Gastrocnemius medialis (tissue), 4 donors: ENCODE measurements at regions of chr10 and their contacts with region 1.

Region 1: DNA sequence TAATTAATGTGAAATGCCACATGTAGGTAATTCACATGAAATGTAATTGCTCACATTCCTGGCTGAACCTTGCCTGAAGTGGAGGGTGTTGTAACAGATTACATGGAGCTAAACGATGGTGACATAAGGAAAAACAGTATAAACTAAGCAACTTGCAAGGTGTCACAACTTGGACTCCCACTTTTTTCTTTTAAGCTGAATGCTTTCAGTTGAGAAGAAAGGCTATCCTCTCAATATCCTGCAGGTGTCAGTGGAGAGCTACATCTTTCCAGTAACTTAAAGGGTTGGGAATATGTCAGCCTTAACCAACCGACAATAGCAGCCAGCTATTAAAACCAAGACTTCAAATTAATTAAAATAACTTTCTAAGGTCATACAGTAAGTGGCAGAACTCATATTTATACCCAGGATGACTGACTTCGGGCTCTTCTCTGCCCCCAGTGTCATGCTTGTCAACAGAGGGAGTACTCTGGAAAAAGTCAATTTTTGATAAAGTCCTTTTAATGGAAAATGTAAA is 33.7 kb downstream of the NRBF2 start:
- DNase-seq: no peak
- ATAC-seq: peak; percentile 77 to 81
- H3K4me3 ChIP-seq: no peak overlapping the region
- H3K27ac ChIP-seq: peak overlapping the region in 1 of 4 donors; percentile 29
- H3K4me1 ChIP-seq: peaks cover 0 to 11% of the 10 kb centered on the region in 2 donors
- H3K27me3 ChIP-seq: no peaks in the 10 kb centered on the region
- CTCF ChIP-seq: peak; percentile 67 to 85 (median 78)
- POLR2A ChIP-seq: no peak

Region 2: GRCh38 chr10:62594093-62594520 is 572.7 kb before region 1 on chr10:
- in situ Hi-C with region 1: loop called in 3 of 4 experiments (anchors 10 to 25 kb)
- intact Hi-C with region 1: no loop called
- DNase-seq: peak; percentile 12 to 27
- ATAC-seq: peak; percentile 74 to 88
- H3K4me3 ChIP-seq: no peak overlapping the region
- H3K27ac ChIP-seq: no peak overlapping the region
- H3K4me1 ChIP-seq: no peaks in the 10 kb centered on the region
- H3K27me3 ChIP-seq: no peaks in the 10 kb centered on the region
- CTCF ChIP-seq: peak; percentile 61 to 76 (median 73)
- POLR2A ChIP-seq: no peak

Region 3: DNA sequence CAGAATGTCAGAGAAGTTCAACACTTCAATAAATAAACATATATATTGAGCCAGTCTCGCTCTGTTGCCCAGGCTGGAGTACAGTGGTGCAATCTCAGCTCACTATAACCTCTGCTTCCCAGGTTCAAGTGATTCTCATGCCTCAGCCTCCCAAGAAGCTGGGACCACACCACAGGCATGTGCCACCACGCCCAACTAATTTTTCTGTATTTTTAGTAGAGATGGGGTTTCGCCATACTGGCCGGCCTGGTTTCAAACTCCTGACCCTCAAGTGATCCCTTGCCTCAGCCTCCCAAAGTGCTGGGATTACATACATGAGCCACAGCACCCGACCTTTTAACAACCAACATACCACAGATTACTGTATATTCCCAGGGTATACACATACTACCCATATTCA is 164.8 kb after region 1 on chr10:
- in situ Hi-C with region 1: no loop called
- intact Hi-C with region 1: no loop called
- DNase-seq: no peak
- ATAC-seq: no peak
- H3K4me3 ChIP-seq: no peak overlapping the region
- H3K27ac ChIP-seq: no peak overlapping the region
- H3K4me1 ChIP-seq: no peaks in the 10 kb centered on the region
- H3K27me3 ChIP-seq: no peaks in the 10 kb centered on the region
- CTCF ChIP-seq: no peak
- POLR2A ChIP-seq: no peak

Region 4: DNA sequence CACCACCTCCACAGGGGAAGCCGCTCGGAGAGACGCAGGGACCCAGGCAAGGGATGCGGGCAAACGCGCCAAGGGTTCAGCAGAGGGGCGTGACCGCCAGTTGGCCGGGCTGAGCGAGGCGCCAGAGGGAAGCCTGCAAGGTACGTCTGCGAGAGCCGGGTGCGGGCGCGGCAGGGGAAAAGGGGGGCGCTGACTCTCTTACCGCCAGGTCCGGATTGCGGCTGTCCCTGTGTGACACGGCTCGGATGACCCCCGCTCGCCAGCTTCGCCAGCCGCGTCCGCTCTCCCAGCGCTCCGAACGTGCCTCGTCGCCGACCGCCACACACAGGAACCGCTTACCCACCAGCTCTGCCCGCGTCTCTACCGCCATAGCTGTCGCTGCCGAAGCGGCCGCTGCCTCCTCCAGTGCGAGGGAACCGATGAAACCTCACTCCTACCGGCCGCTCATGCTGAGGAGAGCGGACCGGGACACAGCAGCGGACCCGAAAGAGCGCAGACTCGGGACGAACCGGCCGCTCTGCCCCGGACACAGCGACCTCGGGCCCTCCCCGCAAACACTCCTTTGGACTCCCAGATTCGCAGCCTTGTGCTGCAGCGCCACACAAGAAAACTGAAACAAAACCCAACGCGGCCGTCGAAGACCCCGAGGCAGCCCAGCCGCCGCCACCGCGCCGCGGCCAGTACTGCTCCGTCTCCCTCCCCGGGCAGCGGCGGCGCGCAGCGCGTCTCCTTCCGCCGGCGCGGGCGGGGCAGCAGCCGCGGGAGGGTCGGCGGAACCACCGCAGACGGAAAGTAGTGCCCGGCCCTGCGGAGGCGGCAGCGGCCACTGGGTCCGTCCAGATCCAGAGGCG is 298.7 kb after region 1 on chr10 and contains the start of gene JMJD1C:
- in situ Hi-C with region 1: no loop called
- intact Hi-C with region 1: loop called (anchors 5 kb)
- DNase-seq: peak; percentile 48 to 78
- ATAC-seq: peak; percentile 84 to 88
- H3K4me3 ChIP-seq: peak within 1 kb of the TSS; percentile 82 to 95 (median 92)
- H3K27ac ChIP-seq: peak within 1 kb of the TSS; percentile 93 to 95 (median 94)
- H3K4me1 ChIP-seq: peaks cover 26% of the 10 kb centered on the region in 2 donors
- H3K27me3 ChIP-seq: no peaks in the 10 kb centered on the region
- CTCF ChIP-seq: peak in 2 of 5 experiments; percentile 13 to 20
- POLR2A ChIP-seq: peak; percentile 79 to 82
- total RNA-seq, gene JMJD1C: 22.5 to 74.1 (median 46.9) TPM

Region 5: GRCh38 chr10:63720072-63720537 is 553.3 kb after region 1 on chr10:
- in situ Hi-C with region 1: loop called in 2 of 4 experiments (anchors 10 kb)
- intact Hi-C with region 1: loop called (anchors 1 kb)
- DNase-seq: no peak
- ATAC-seq: peak; percentile 27 to 32
- H3K4me3 ChIP-seq: peak overlapping the region in 1 of 4 donors; percentile 11
- H3K27ac ChIP-seq: peak overlapping the region in 3 of 4 donors; percentile 33 to 61 (median 37)
- H3K4me1 ChIP-seq: peaks cover 10 to 19% of the 10 kb centered on the region in 2 donors
- H3K27me3 ChIP-seq: no peaks in the 10 kb centered on the region
- CTCF ChIP-seq: peak; percentile 88 to 99 (median 94)
- POLR2A ChIP-seq: no peak

Region 6: GRCh38 chr10:63767138-63767801 is 600.5 kb after region 1 on chr10:
- in situ Hi-C with region 1: no loop called
- intact Hi-C with region 1: loop called (anchors 2 kb)
- DNase-seq: no peak
- ATAC-seq: peak in 1 of 2 donors; percentile 21
- H3K4me3 ChIP-seq: no peak overlapping the region
- H3K27ac ChIP-seq: peak overlapping the region in 3 of 4 donors; percentile 3 to 11 (median 5)
- H3K4me1 ChIP-seq: no peaks in the 10 kb centered on the region
- H3K27me3 ChIP-seq: no peaks in the 10 kb centered on the region
- CTCF ChIP-seq: peak in 3 of 5 experiments; percentile 27 to 29 (median 29)
- POLR2A ChIP-seq: no peak

Region 7: DNA sequence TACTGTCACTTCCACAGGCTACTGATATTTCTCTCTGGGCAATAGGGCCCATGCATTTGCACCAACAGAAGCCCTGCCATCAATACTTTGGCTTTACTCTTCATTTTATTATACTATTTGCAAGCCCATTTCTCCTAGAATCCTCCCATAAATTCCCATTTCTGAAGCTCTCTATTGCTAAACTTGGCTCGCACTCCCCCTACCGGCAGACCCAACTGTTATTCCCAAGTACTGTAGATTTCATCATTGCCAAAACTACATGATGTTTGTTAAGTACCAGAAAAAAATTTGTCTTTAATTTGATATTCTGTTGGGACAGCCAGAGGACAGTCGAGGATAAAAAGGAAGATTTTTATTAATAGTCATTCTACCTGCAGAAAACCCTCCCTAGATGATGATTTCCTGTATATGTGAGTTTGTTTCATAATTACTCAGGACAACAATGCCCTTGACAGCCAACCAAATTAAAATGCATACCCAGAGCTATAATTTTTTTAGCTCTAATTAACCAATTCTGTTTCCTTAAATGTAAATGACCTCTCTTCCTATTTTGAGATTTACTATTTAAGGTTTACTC is 653.0 kb after region 1 on chr10:
- in situ Hi-C with region 1: no loop called
- intact Hi-C with region 1: loop called (anchors 5 kb)
- DNase-seq: peak; percentile 5 to 23
- ATAC-seq: no peak
- H3K4me3 ChIP-seq: no peak overlapping the region
- H3K27ac ChIP-seq: no peak overlapping the region
- H3K4me1 ChIP-seq: no peaks in the 10 kb centered on the region
- H3K27me3 ChIP-seq: no peaks in the 10 kb centered on the region
- CTCF ChIP-seq: peak; percentile 27 to 68 (median 47)
- POLR2A ChIP-seq: no peak